ENCODE measurements at regions of chr15 and their contacts with region 1.

Region 1: DNA sequence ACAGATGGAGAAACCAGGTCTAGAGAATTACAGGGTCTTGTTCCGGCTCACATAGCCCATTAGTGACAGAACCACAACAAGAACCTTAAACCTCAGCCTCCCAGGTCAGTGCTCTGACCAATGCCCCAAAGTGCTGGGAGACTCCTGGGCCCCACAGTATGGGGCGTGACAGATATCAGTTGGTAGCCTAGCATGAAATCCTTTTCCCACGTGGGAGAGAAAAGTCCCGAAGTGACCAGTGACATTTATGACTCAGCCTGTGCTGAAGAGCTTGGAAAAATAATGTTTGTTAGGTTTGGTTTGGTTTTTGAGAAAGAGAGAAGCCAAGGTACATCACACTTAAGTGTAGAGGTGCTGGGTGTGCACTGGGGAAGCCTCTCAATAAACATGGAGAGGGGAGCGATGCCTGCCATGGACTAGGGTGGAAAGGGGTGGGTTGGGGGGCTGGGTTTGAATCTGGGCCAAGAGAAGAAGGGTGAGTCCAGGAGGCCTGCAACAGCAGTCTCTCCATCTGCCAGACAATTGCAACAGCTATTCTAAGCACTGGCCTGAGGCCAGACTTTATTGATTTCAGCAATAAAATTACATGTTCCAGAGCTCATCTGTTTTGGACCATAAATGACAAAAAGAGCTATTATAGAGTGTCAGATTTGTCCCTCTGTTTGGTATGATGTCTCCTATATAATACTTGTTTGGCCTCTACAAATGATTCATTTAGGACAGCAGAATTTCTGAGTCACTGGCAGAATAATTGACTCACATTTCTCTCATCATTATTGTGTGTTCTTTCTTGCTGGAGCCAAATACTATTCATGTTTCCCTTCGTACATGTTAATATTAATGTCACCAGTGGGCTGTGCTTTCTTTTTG is 43.4 kb downstream of the C2CD4A start:
- DNase-seq: peak; percentile 77
- H3K4me3 ChIP-seq: no peak overlapping the region
- H3K27ac ChIP-seq: peak overlapping the region; percentile 77 to 99
- H3K4me1 ChIP-seq: peaks cover 16 to 38% of the 10 kb centered on the region in 2 experiments
- H3K27me3 ChIP-seq: no peaks in the 10 kb centered on the region
- CTCF ChIP-seq: no peak
- EP300 ChIP-seq: peak; percentile 19 to 98; a peak in 3 of 4 replicates
- RAD21 ChIP-seq: peak; percentile 19

Region 2: GRCh38 chr15:61974759-61975158 is 135.5 kb before region 1 on chr15:
- CTCF ChIA-PET with region 1: no interaction called
- POLR2A ChIA-PET with region 1: no interaction called
- DNase-seq: no peak
- H3K4me3 ChIP-seq: no peak overlapping the region
- H3K27ac ChIP-seq: no peak overlapping the region; a peak in 1 of 4 replicates
- H3K4me1 ChIP-seq: no peaks in the 10 kb centered on the region; a peak in 2 of 4 replicates
- H3K27me3 ChIP-seq: no peaks in the 10 kb centered on the region
- CTCF ChIP-seq: no peak
- EP300 ChIP-seq: no peak
- RAD21 ChIP-seq: no peak

Region 3: GRCh38 chr15:62125773-62126172 is 15.6 kb after region 1 on chr15:
- CTCF ChIA-PET with region 1: interaction called, 24 read pairs
- POLR2A ChIA-PET with region 1: no interaction called
- DNase-seq: peak; percentile 36
- H3K4me3 ChIP-seq: no peak overlapping the region
- H3K27ac ChIP-seq: no peak overlapping the region; a peak in 1 of 4 replicates
- H3K4me1 ChIP-seq: peaks cover 0 to 5% of the 10 kb centered on the region in 2 experiments; a peak in 2 of 4 replicates
- H3K27me3 ChIP-seq: no peaks in the 10 kb centered on the region
- CTCF ChIP-seq: peak; percentile 53
- EP300 ChIP-seq: no peak
- RAD21 ChIP-seq: peak; percentile 59

Region 4: DNA sequence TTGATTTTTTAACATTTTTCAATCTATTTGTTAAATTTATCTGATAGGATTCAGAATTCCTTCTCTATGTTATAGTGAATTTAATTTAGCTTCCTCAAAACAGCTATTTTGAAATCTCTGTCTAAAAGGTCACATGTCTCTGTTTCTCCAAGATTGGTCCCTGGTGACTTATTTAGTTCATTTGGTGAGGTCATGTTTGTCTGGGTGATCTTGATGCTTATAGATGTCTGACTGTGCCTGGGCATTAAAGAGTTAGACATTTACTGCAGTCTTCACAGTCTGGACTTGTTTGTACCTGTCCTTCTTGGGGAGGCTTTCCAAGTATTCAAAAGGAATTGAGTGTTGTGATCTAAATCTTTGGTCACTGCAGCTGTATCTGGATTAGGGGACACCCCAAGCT is 224.3 kb after region 1 on chr15:
- CTCF ChIA-PET with region 1: no interaction called
- POLR2A ChIA-PET with region 1: no interaction called
- DNase-seq: no peak
- H3K4me3 ChIP-seq: no peak overlapping the region
- H3K27ac ChIP-seq: no peak overlapping the region
- H3K4me1 ChIP-seq: no peaks in the 10 kb centered on the region; a peak in 2 of 4 replicates
- H3K27me3 ChIP-seq: no peaks in the 10 kb centered on the region
- CTCF ChIP-seq: no peak
- EP300 ChIP-seq: no peak
- RAD21 ChIP-seq: no peak

Region 5: GRCh38 chr15:62365795-62366442 is 255.7 kb after region 1 on chr15:
- CTCF ChIA-PET with region 1: no interaction called
- POLR2A ChIA-PET with region 1: no interaction called
- DNase-seq: no peak
- H3K4me3 ChIP-seq: no peak overlapping the region
- H3K27ac ChIP-seq: no peak overlapping the region
- H3K4me1 ChIP-seq: no peaks in the 10 kb centered on the region; a peak in 1 of 4 replicates
- H3K27me3 ChIP-seq: no peaks in the 10 kb centered on the region
- CTCF ChIP-seq: no peak
- EP300 ChIP-seq: no peak
- RAD21 ChIP-seq: no peak

Measured in SK-N-SH (cell line).